ENCODE measurements at regions of chr6 and their contacts with region 1.

Region 1: DNA sequence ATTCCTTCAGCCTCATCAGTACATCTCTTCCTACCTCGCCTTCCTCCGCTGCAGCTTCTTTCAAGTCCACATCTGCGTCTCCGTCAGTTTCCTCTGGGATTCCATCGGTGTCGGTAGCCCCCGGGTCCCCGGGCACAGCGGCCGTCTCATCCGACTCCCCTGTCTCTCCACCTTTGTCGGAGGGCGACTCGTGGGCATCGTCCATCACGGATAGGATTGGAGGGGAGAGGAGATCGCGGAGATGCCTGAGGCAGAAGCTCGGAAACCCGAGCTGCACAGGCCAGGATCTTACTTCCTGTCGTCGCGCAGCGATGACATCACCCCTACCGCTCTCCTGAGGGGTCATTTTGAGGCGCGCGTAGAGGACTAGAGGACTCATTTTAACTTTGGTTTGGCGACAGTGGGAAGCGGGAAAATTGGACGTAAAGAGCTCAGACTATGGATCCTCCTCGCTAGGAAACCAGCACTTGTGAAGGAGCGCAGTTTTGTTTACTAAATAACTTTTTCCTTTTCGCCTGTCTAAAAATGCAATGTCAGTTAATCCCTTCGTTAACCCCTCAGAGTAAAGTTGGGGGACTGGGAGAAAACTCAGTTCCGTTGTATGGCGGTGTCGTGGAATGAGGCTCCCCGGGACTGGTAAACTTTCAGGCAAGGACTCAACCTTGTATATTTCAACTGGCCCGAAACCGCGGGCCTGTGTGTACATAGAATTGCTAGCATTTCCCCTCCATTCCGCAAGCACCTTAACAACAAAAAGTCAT is at the start of gene TAF11:
- DNase-seq: peak; percentile 93
- H3K4me3 Mint-ChIP-seq: peak within 1 kb of the TSS; percentile 99
- H3K27ac Mint-ChIP-seq: peak within 1 kb of the TSS; percentile 98
- H3K4me1 Mint-ChIP-seq: peaks cover 52% of the 10 kb centered on the region
- H3K27me3 Mint-ChIP-seq: peaks cover 6% of the 10 kb centered on the region
- total RNA-seq, gene TAF11: 27.4 to 28.5 TPM

Region 2: DNA sequence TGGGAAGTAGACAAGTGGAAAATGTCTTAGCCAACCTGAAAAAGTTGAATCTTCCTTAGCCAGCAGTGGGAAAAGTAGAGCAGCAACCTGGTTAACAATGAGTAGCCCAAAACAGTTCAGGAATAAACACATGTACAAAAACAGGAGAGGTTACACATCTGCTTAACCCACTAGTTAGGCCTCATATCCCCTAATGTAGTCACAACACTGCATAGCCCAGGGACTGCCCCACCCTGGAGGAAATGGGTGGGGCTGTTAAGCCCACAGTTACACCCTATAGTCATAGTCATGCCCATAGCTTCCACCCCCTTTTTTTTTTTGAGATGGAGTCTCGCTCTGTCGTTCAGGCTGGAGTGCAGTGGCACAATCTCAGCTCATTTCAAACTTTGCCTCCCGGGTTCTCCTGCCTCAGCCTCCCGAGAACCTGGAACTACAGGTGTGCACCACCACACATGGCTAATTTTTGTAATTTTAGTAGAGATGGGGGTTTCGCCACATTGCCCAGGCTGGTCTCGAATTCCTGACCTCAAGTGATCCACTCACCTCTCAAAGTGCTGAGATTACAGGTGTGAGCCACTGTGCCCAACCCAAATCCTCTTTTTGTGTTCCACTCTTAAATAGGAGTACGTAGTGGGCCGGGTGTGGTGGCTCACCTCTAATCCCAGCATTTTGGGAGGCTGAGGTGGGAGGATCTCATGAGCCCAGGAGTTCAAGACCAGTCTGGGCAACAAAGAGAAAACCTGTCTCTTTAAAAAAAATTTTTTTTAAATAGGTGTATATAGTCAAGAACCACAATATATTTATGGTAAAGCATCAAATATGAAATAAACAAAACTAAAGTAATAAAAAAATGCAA is 215.9 kb before region 1 on chr6:
- CTCF ChIA-PET with region 1: interaction called, 6 read pairs
- POLR2A ChIA-PET with region 1: interaction called, 10 read pairs
- DNase-seq: peak; percentile 84
- H3K4me3 Mint-ChIP-seq: peak overlapping the region; percentile 75
- H3K27ac Mint-ChIP-seq: peak overlapping the region; percentile 98
- H3K4me1 Mint-ChIP-seq: peaks cover 62% of the 10 kb centered on the region
- H3K27me3 Mint-ChIP-seq: no peaks in the 10 kb centered on the region

Region 3: GRCh38 chr6:34791701-34792235 is 96.2 kb before region 1 on chr6 and contains the start of gene BLTP3A:
- CTCF ChIA-PET with region 1: interaction called, 12 read pairs
- POLR2A ChIA-PET with region 1: interaction called, 26 read pairs
- DNase-seq: peak; percentile 80
- H3K4me3 Mint-ChIP-seq: peak within 1 kb of the TSS; percentile 91
- H3K27ac Mint-ChIP-seq: peak within 1 kb of the TSS; percentile 88
- H3K4me1 Mint-ChIP-seq: peaks cover 28% of the 10 kb centered on the region
- H3K27me3 Mint-ChIP-seq: no peaks in the 10 kb centered on the region
- total RNA-seq, gene BLTP3A: 12.3 to 12.6 TPM

Region 4: GRCh38 chr6:34909320-34909883 is 21.5 kb after region 1 on chr6:
- CTCF ChIA-PET with region 1: no interaction called
- POLR2A ChIA-PET with region 1: interaction called, 13 read pairs
- DNase-seq: no peak
- H3K4me3 Mint-ChIP-seq: no peak overlapping the region
- H3K27ac Mint-ChIP-seq: no peak overlapping the region
- H3K4me1 Mint-ChIP-seq: peaks cover 44% of the 10 kb centered on the region
- H3K27me3 Mint-ChIP-seq: peaks cover 59% of the 10 kb centered on the region

Measured in activated CD4-positive, alpha-beta memory T cell treated with anti-CD3 and anti-CD28 coated beads, Interleukin-2, amount 10 ng/mL, durations not matched to agents 7 days and 5 days (primary cell).